Panc1 (cell line): ENCODE measurements at regions of chr3 and their contacts with region 1.

Region 1: GRCh38 chr3:136390574-136390973 is 140.4 kb downstream of the PCCB start:
- DNase-seq: no peak
- ATAC-seq: no peak
- H3K4me3 ChIP-seq: no peak overlapping the region
- H3K27ac ChIP-seq: no peak overlapping the region
- H3K4me1 ChIP-seq: no peaks in the 10 kb centered on the region
- H3K27me3 ChIP-seq: no peaks in the 10 kb centered on the region
- CTCF ChIP-seq: no peak

Region 2: GRCh38 chr3:136122006-136122405 is 268.6 kb before region 1 on chr3:
- CTCF ChIA-PET with region 1: no interaction called
- POLR2A ChIA-PET with region 1: interaction called, 10 read pairs
- in situ Hi-C with region 1: no loop called
- intact Hi-C with region 1: no loop called
- DNase-seq: no peak
- ATAC-seq: no peak
- H3K4me3 ChIP-seq: no peak overlapping the region
- H3K27ac ChIP-seq: no peak overlapping the region
- H3K4me1 ChIP-seq: no peaks in the 10 kb centered on the region
- H3K27me3 ChIP-seq: no peaks in the 10 kb centered on the region
- CTCF ChIP-seq: no peak

Region 3: GRCh38 chr3:136671921-136672320 is 281.3 kb after region 1 on chr3:
- CTCF ChIA-PET with region 1: no interaction called
- POLR2A ChIA-PET with region 1: interaction called, 12 read pairs
- in situ Hi-C with region 1: no loop called
- intact Hi-C with region 1: no loop called
- DNase-seq: no peak
- ATAC-seq: no peak
- H3K4me3 ChIP-seq: no peak overlapping the region
- H3K27ac ChIP-seq: no peak overlapping the region
- H3K4me1 ChIP-seq: no peaks in the 10 kb centered on the region
- H3K27me3 ChIP-seq: no peaks in the 10 kb centered on the region
- CTCF ChIP-seq: no peak